Testis (tissue), 5 donors: ENCODE measurements at regions of chr5 and their contacts with region 1.

Region 1: GRCh38 chr5:148730943-148731861 is 76.9 kb upstream of the HTR4 start:
- DNase-seq: peak; percentile 93
- H3K4me3 ChIP-seq: no peak overlapping the region
- H3K27ac ChIP-seq: no peak overlapping the region
- H3K4me1 ChIP-seq: no peaks in the 10 kb centered on the region
- H3K27me3 ChIP-seq: no peaks in the 10 kb centered on the region
- CTCF ChIP-seq: peak; percentile 94 to 98 (median 97)
- POLR2A ChIP-seq: no peak

Region 2: GRCh38 chr5:148443998-148444397 is 287.2 kb before region 1 on chr5:
- intact Hi-C with region 1: loop called (anchors 10 kb)
- DNase-seq: peak; percentile 69
- H3K4me3 ChIP-seq: no peak overlapping the region
- H3K27ac ChIP-seq: no peak overlapping the region
- H3K4me1 ChIP-seq: no peaks in the 10 kb centered on the region
- H3K27me3 ChIP-seq: no peaks in the 10 kb centered on the region
- CTCF ChIP-seq: peak; percentile 71 to 82 (median 75)
- POLR2A ChIP-seq: no peak

Region 3: DNA sequence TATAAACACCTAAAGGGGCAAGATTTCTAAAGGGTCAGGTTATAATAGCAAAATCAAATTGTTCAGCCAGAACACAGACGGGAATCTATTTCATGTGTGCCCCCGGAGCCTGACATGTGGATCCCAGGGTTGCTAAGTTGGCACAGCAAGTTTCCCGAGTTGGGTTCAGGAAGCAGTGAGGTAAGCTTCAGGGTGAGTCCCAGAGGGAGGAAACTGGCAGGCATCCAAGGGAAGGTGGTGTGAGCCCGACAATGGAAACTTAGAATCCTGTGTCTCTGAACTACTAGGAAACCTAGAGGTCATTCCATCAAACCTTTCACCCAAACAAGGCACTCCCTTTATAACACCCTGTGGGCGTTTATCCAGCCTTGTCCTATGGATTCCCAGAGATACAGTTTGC is 193.6 kb after region 1 on chr5:
- intact Hi-C with region 1: no loop called
- DNase-seq: no peak
- H3K4me3 ChIP-seq: no peak overlapping the region
- H3K27ac ChIP-seq: no peak overlapping the region
- H3K4me1 ChIP-seq: no peaks in the 10 kb centered on the region
- H3K27me3 ChIP-seq: no peaks in the 10 kb centered on the region
- CTCF ChIP-seq: no peak
- POLR2A ChIP-seq: no peak